CD14-positive monocyte (primary cell): ENCODE measurements at regions of chr22 and their contacts with region 1.

Region 1: GRCh38 chr22:20016734-20017621 is at the start of gene ARVCF:
- DNase-seq: peak; percentile 88 to 91 (median 89)
- H3K4me3 ChIP-seq: peak within 1 kb of the TSS; percentile 53 to 79 (median 59)
- H3K4me3 Mint-ChIP-seq: peak within 1 kb of the TSS; percentile 85 to 94
- H3K27ac ChIP-seq: no peak within 1 kb of the TSS
- H3K27ac Mint-ChIP-seq: no peak within 1 kb of the TSS
- H3K4me1 ChIP-seq: peaks cover 18 to 31% of the 10 kb centered on the region in 2 donors
- H3K4me1 Mint-ChIP-seq: peaks cover 17% of the 10 kb centered on the region
- H3K27me3 ChIP-seq: peaks cover 17 to 37% of the 10 kb centered on the region in 2 donors
- H3K27me3 Mint-ChIP-seq: peaks cover 37 to 53% (median 45%) of the 10 kb centered on the region in 3 donors
- CTCF ChIP-seq: no peak
- polyA plus RNA-seq, gene ARVCF: 0.31 to 2.6 (median 0.44) TPM

Region 2: GRCh38 chr22:19730655-19731360 is 286.2 kb before region 1 on chr22:
- intact Hi-C with region 1: loop called in 1 of 2 experiments (anchors 5 kb)
- DNase-seq: peak; percentile 63 to 68 (median 67)
- H3K4me3 ChIP-seq: peak overlapping the region in 1 of 3 experiments; percentile 67
- H3K4me3 Mint-ChIP-seq: peak overlapping the region; percentile 62 to 90
- H3K27ac ChIP-seq: no peak overlapping the region
- H3K27ac Mint-ChIP-seq: no peak overlapping the region
- H3K4me1 ChIP-seq: peaks cover 7 to 8% of the 10 kb centered on the region in 2 donors
- H3K4me1 Mint-ChIP-seq: peaks cover 4% of the 10 kb centered on the region
- H3K27me3 ChIP-seq: peaks cover 0 to 10% of the 10 kb centered on the region in 2 donors
- H3K27me3 Mint-ChIP-seq: peaks cover 12 to 54% (median 19%) of the 10 kb centered on the region in 3 donors
- CTCF ChIP-seq: peak; percentile 95

Region 3: GRCh38 chr22:19970479-19971275 is 46.3 kb before region 1 on chr22:
- intact Hi-C with region 1: loop called (anchors 2 to 5 kb)
- DNase-seq: peak; percentile 52 to 59 (median 55)
- H3K4me3 ChIP-seq: no peak overlapping the region
- H3K4me3 Mint-ChIP-seq: no peak overlapping the region
- H3K27ac ChIP-seq: no peak overlapping the region
- H3K27ac Mint-ChIP-seq: peak overlapping the region in 1 of 7 donors; percentile 14
- H3K4me1 ChIP-seq: no peaks in the 10 kb centered on the region
- H3K4me1 Mint-ChIP-seq: peaks cover 20% of the 10 kb centered on the region
- H3K27me3 ChIP-seq: no peaks in the 10 kb centered on the region
- H3K27me3 Mint-ChIP-seq: peaks cover 2 to 5% (median 3%) of the 10 kb centered on the region in 3 donors
- CTCF ChIP-seq: peak; percentile 99

Region 4: DNA sequence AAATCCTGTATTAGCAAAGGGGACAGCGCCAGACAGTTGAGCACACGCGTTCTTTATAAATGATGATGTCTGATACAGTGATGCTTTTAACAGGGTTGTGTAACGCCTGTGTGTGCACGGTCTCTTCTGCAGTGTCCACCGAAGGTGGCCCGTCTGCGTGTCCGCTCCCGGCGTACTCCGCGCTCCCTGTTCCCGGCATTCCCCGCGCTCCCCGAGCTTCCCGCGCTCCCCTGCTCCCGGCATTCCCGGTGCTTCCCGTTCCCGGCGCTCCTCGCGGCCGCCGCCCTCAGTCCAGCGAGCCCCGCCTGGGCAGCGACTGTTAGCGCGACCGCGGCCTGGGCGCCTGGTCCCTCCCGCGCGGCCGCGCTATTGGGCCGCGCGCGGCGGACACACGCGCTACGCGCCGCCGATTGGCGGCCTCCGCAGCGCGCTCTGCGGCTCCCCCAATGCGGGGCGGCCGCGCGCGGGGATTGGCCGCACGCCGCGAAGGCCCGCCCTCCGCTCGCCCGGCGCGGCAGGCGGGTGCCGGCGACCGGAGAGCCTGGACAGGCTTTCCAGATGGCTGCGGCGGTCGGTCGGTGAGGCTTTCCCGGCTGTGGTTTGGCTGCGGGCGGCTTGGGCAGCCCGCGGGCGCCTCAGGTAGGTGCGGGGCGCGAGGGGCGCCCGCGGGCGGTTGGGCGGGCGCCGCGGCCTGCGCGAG is 62.9 kb after region 1 on chr22 and contains the start of gene DGCR8:
- intact Hi-C with region 1: loop called in 1 of 2 experiments (anchors 5 kb)
- DNase-seq: peak; percentile 66 to 79 (median 77)
- H3K4me3 ChIP-seq: peak within 1 kb of the TSS; percentile 63 to 89 (median 76)
- H3K4me3 Mint-ChIP-seq: peak within 1 kb of the TSS; percentile 92 to 94
- H3K27ac ChIP-seq: peak within 1 kb of the TSS; percentile 43 to 66
- H3K27ac Mint-ChIP-seq: peak within 1 kb of the TSS; percentile 79 to 91 (median 85)
- H3K4me1 ChIP-seq: peaks cover 11 to 14% of the 10 kb centered on the region in 2 donors
- H3K4me1 Mint-ChIP-seq: peaks cover 37% of the 10 kb centered on the region
- H3K27me3 ChIP-seq: no peaks in the 10 kb centered on the region
- H3K27me3 Mint-ChIP-seq: no peaks in the 10 kb centered on the region
- CTCF ChIP-seq: no peak
- polyA plus RNA-seq, gene DGCR8: 1.2 to 18.7 (median 1.4) TPM